Caco-2 (cell line): ENCODE measurements at regions of chr17 and their contacts with region 1.

Region 1: GRCh38 chr17:8785547-8786413 is 13.4 kb downstream of the MFSD6L start:
- DNase-seq: peak; percentile 61 to 75
- H3K4me3 ChIP-seq: no peak overlapping the region
- H3K4me3 Mint-ChIP-seq: no peak overlapping the region
- H3K27ac Mint-ChIP-seq: no peak overlapping the region
- H3K4me1 ChIP-seq: peaks cover 7% of the 10 kb centered on the region; the same call in 1 of the 2 replicates
- H3K4me1 Mint-ChIP-seq: peaks cover 16% of the 10 kb centered on the region
- H3K27me3 ChIP-seq: no peaks in the 10 kb centered on the region
- H3K27me3 Mint-ChIP-seq: peaks cover 5% of the 10 kb centered on the region
- CTCF ChIP-seq: peak; percentile 59 to 63

Region 2: DNA sequence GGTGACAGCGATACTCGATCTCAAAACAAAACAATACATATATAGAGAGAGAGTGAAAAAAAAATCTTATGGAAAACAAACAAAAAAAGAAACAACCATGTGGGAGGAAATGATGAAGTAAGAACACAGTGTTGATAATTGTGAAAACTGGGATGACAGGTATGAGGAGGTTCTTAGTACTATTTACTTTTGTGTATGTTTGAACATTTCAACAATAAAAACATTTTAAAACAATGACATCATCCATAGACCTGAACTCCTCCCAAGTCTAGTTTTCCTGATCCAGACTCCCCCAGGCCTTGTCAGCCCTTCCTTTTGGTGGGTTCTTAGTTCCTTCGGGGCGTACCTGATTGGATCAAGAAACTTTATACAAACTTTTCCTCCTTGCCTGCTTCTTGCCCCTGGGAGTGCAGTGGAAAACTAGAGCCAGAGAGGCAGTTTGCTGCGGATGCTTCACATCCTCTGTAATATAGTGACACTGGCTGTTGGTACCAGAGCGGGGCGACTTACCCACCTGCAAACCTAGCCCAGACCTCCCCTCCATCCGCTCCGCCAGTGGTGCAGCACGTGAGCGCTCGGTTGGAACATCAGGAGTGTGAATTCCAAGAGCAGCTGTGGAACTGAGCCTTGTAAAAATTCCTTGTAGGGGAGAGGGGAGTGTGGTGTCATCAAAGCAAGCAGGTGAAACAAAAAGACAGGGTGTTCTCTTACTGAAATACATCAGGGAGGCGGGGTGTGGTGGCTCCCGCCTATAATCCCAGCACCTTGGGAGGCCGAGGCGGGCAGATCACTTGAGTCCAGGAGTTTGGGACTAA is 92.7 kb before region 1 on chr17:
- CTCF ChIA-PET with region 1: no interaction called
- POLR2A ChIA-PET with region 1: no interaction called
- intact Hi-C with region 1: no loop called
- DNase-seq: peak in 1 of 2 experiments; percentile 44
- H3K4me3 ChIP-seq: no peak overlapping the region
- H3K4me3 Mint-ChIP-seq: no peak overlapping the region
- H3K27ac Mint-ChIP-seq: peak overlapping the region; percentile 60
- H3K4me1 ChIP-seq: peaks cover 15% of the 10 kb centered on the region
- H3K4me1 Mint-ChIP-seq: peaks cover 3% of the 10 kb centered on the region
- H3K27me3 ChIP-seq: no peaks in the 10 kb centered on the region
- H3K27me3 Mint-ChIP-seq: no peaks in the 10 kb centered on the region
- CTCF ChIP-seq: no peak

Region 3: GRCh38 chr17:8753976-8754440 is 31.8 kb before region 1 on chr17:
- CTCF ChIA-PET with region 1: interaction called, 4 read pairs
- POLR2A ChIA-PET with region 1: no interaction called
- intact Hi-C with region 1: loop called (anchors 1 kb)
- DNase-seq: peak in 1 of 2 experiments; percentile 14
- H3K4me3 ChIP-seq: no peak overlapping the region
- H3K4me3 Mint-ChIP-seq: no peak overlapping the region
- H3K27ac Mint-ChIP-seq: no peak overlapping the region
- H3K4me1 ChIP-seq: no peaks in the 10 kb centered on the region
- H3K4me1 Mint-ChIP-seq: no peaks in the 10 kb centered on the region
- H3K27me3 ChIP-seq: no peaks in the 10 kb centered on the region; the same call in 1 of the 2 replicates
- H3K27me3 Mint-ChIP-seq: peaks cover 30% of the 10 kb centered on the region
- CTCF ChIP-seq: peak; percentile 29 to 49